OCI-LY7 (cell line): ENCODE measurements at regions of chr19 and their contacts with region 1.

Region 1: DNA sequence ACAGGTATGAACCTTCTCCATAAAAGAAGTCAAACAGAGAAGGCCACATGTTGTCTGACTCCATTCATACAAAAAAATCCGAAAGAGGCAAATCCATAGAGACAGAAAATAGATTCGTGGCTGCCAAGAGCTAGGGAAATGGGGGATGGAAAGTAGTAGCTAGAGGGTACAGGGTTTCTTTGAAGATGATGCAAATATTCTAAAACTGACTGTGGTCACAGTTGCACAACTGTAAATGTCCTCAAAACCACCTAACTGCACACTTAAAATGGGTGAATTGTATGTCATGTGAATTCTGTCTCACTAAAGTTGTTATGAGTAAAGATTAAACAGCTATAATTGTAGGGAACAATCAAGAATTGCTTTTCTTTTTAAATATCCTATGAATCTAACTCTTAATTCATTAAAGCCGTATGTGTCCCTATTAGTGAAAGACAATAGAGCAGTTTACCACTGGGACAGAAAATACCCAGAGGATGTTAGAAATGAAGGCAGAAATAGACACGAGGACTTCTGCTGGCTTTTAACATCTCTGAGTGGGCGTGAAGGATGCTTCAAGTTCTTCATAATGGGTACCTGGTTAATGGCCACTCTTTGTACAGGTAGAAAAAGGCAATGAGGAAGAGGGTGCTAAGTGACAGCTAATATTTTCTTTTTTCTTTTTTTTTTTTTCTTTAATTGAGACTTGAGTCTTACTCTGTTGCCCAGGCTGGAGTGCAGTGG is 21.2 kb downstream of the INSR start:
- DNase-seq: peak; percentile 80
- H3K4me3 ChIP-seq: peak overlapping the region; percentile 54
- H3K27ac ChIP-seq: peak overlapping the region; percentile 90
- H3K4me1 ChIP-seq: peaks cover 71% of the 10 kb centered on the region
- CTCF ChIP-seq: no peak

Region 2: DNA sequence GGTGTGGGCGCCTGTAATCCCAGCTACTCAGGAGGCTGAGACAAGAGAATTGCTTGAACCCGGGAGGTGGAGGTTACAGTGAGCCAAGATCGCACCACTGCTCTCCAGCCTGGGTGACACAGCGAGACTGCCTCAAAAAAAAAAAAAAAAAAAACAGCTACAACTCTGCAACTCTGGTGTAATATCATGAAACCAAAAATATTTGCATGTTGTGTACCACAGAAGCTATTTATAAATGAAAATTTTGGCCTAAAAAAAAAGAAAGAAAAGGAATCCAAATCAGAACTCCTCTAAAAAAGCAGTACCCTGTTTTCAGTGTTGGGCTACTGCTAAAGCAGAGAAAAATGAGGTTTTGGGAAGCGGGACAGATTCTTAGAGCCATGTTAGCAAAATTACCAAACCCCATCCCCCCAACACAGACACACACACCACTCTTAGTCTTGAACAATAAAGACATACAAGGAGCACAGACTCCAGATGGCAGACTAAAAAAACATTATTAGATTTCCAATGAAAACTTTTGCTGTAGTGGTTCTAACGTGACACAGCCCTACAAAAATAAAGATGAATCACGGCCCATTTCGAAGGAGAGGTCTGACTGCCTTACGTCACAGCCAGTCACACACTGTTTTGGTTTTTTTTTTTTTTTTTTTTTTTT is 30.3 kb before region 1 on chr19:
- CTCF ChIA-PET with region 1: interaction called, 3 read pairs
- POLR2A ChIA-PET with region 1: interaction called, 20 read pairs
- intact Hi-C with region 1: loop called (anchors 2 kb)
- DNase-seq: peak; percentile 62
- H3K4me3 ChIP-seq: peak overlapping the region; percentile 60
- H3K27ac ChIP-seq: peak overlapping the region; percentile 83
- H3K4me1 ChIP-seq: peaks cover 58% of the 10 kb centered on the region
- CTCF ChIP-seq: no peak

Region 3: DNA sequence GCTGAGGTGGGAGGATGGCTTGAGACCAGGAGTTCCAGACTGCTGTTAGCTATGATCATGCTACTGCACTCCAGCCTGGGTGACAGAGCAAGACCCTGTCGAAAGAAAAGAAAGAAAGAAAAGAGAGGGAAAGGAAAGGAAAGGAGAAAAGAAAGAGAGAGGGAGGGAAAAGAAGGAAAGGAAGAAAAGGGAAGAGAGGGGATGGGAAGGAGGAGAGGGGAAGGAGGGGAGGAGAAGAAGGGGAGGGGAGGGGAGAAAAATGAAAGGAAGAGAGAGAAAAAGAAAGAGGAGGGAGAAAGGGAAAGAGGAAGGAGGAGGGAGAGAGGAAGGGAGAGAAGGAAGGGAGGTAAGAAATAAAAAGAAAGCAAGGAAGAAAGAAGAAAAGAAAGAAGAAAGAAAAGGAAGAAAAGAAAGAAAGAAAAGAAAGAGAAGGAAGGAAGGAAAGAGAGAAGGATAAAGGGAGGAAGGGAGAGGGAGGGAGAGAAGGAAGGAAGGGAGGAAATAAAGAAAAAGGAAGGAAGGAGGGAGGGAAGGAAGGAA is 22.9 kb before region 1 on chr19:
- CTCF ChIA-PET with region 1: no interaction called
- POLR2A ChIA-PET with region 1: interaction called, 20 read pairs
- intact Hi-C with region 1: no loop called
- DNase-seq: no peak
- H3K4me3 ChIP-seq: no peak overlapping the region
- H3K27ac ChIP-seq: no peak overlapping the region
- H3K4me1 ChIP-seq: peaks cover 28% of the 10 kb centered on the region
- CTCF ChIP-seq: no peak

Region 4: DNA sequence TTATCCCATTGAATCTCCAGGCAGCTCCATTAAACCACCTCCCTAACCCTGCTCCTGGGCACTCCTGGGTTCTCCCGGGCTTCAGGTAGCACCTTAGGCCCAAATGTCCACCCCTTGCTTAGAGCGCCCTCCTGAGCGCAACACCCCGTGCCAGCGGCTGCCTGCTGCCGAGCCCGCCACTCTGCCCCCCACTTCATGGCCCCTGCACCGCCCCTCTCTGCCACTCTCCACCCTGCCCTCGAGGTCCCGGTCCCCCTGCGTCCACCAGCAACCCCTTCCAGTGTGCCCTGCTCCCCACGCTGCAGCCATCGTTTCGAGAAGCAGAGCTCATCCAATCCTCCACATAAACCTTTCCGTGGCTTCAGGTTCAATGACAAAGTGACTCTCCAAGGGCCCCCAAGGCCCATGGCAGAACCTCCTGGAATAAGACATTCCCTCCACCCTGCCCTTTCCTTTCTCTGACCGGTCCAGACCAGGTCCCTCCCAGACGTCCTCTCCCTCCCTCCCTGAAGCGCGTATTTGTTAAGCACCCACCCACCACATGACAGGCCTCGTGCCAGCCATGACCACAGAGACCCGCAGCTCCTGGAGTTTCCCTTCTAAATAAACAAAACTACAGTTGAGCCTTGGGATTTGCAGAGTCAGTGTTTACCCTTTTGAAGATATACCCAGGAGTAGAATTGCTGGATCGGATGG is 142.3 kb after region 1 on chr19:
- CTCF ChIA-PET with region 1: no interaction called
- POLR2A ChIA-PET with region 1: no interaction called
- intact Hi-C with region 1: no loop called
- DNase-seq: no peak
- H3K4me3 ChIP-seq: no peak overlapping the region
- H3K27ac ChIP-seq: no peak overlapping the region
- H3K4me1 ChIP-seq: peaks cover 10% of the 10 kb centered on the region
- CTCF ChIP-seq: no peak